Transverse colon (tissue), 4 donors: ENCODE measurements at regions of chr9 and their contacts with region 1.

Region 1: DNA sequence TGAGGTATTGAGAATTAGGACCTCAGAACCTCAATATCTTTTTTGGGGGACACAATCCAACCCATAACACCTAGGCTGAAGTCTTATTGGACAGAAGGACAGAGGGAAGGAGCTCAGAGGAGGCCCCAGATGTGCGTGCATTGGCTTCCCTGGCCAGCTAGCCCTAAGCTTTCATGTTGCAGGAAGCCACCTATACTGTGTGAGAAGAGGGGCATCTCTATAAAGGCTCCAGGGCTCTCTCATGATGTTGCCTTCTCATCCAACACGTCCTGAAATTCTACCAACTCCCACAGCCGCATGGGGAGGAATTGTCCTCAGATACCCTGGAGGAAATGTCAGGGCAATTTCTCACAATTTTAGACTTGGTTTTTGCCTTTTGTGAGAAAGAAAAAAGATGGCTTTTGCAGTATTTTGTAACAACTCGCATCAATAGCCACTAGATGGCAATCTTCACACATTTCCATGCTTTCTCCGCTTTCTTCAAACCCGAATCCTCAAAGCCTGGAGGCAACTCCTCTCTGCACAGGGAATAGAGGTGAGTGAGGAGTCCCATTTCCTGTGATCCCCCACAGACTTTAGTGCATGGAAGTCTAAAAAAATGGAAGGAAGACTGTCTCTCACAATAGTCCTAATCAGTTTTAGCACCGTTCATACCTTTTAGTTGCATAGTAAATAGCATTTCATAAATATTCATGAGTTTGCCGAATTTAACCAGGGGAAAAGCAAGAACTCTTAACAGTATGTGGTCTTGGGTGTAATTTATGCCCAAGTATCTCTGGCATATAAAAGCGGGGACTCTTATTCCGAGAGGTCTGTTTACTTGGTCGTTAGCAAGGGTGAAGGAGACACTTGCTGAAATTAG is 7.4 kb upstream of the PPP3R2 start:
- DNase-seq: no peak
- H3K4me3 ChIP-seq: peak overlapping the region in 1 of 4 donors; percentile 15
- H3K27ac ChIP-seq: no peak overlapping the region
- H3K4me1 ChIP-seq: peaks cover 0 to 23% (median 4%) of the 10 kb centered on the region in 4 donors
- H3K27me3 ChIP-seq: no peaks in the 10 kb centered on the region
- CTCF ChIP-seq: peak; percentile 53 to 67 (median 65)
- EP300 ChIP-seq: no peak
- POLR2A ChIP-seq: no peak

Region 2: GRCh38 chr9:101671567-101671966 is 69.4 kb after region 1 on chr9:
- in situ Hi-C with region 1: no loop called
- intact Hi-C with region 1: no loop called
- DNase-seq: no peak
- H3K4me3 ChIP-seq: no peak overlapping the region
- H3K27ac ChIP-seq: no peak overlapping the region
- H3K4me1 ChIP-seq: peaks cover 0 to 28% (median 9%) of the 10 kb centered on the region in 4 donors
- H3K27me3 ChIP-seq: no peaks in the 10 kb centered on the region
- CTCF ChIP-seq: no peak
- EP300 ChIP-seq: no peak
- POLR2A ChIP-seq: no peak

Region 3: DNA sequence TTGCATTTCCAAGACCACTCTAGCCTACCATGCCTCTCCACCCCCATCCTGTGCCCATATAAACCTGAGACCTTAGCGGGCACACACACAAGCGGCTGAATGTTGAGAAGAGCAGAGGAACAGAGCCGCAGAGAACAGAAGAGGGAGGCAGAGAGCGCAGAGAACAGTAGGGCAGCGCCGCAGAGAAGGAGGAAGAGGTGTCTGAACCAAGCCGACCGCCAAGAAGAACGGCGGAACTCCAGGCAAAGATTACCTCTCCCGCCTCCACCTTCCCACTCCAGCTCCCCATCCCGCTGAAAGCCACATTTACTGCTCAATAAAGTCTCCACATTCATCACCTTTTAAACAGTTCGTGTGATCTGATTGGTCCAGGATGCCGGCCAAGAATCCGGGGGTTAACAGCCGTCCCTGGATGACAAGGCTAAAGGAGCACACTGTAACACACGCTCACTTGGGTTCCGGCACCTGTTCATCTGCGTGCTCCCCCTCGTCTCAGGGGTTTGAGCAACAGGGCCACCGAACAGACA is 103.1 kb after region 1 on chr9:
- in situ Hi-C with region 1: loop called in 2 of 4 experiments (anchors 25 kb)
- intact Hi-C with region 1: no loop called
- DNase-seq: peak; percentile 77
- H3K4me3 ChIP-seq: peak overlapping the region in 3 of 4 donors; percentile 0 to 33 (median 24)
- H3K27ac ChIP-seq: peak overlapping the region; percentile 61 to 71 (median 62)
- H3K4me1 ChIP-seq: peaks cover 5 to 30% (median 21%) of the 10 kb centered on the region in 4 donors
- H3K27me3 ChIP-seq: no peaks in the 10 kb centered on the region
- CTCF ChIP-seq: peak in 3 of 5 experiments; percentile 17 to 50 (median 39)
- EP300 ChIP-seq: no peak
- POLR2A ChIP-seq: no peak

Region 4: GRCh38 chr9:101881508-101881907 is 279.4 kb after region 1 on chr9:
- in situ Hi-C with region 1: no loop called
- intact Hi-C with region 1: no loop called
- DNase-seq: no peak
- H3K4me3 ChIP-seq: no peak overlapping the region
- H3K27ac ChIP-seq: no peak overlapping the region
- H3K4me1 ChIP-seq: no peaks in the 10 kb centered on the region
- H3K27me3 ChIP-seq: no peaks in the 10 kb centered on the region
- CTCF ChIP-seq: no peak
- EP300 ChIP-seq: no peak
- POLR2A ChIP-seq: no peak

Region 5: GRCh38 chr9:102113191-102113590 is 511.1 kb after region 1 on chr9:
- in situ Hi-C with region 1: no loop called
- intact Hi-C with region 1: no loop called
- DNase-seq: no peak
- H3K4me3 ChIP-seq: no peak overlapping the region
- H3K27ac ChIP-seq: no peak overlapping the region
- H3K4me1 ChIP-seq: no peaks in the 10 kb centered on the region
- H3K27me3 ChIP-seq: no peaks in the 10 kb centered on the region
- CTCF ChIP-seq: no peak
- EP300 ChIP-seq: no peak
- POLR2A ChIP-seq: no peak